Vagina (tissue), 2 donors: ENCODE measurements at regions of chr22 and their contacts with region 1.

Region 1: DNA sequence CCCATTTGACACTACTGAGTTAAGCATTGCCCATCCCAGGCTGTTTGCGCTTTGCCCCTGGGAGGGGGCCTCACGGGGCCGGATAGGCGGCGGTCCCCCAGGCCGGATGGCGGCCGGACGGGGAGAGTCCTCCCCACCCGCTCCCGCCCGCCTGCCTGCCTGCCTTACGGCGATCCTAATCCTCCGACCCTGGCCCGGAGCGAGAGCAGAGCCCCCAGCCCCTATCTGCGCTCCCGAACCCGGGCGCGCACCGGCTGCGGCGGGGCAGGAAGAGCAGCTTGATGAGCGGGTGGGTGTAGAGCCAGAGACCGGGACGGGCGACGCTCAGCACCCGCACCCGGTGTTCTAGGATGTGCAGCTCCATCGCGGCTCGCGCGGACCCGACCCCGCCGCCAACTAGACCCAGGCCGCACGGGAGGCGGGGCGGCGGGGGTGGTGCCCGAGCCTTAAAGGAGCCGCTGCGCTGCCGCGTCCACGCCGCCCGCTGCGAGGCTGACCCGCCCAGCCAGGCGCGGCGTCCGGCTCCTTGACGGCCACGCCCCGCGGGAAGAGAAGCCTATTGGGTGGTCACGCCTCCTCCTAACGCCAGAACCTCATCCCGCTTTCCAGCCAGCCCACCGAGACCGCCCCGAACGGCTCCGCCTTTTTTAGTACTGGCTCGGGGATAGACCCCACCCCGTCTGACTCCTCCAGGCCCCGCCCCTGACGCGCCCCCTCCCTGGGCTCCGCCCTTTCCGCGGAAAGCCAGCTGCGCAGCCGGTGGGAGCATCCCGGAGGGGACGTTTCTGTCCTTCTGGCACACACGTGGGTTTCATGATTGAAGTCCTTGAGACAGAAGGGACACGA is at the start of gene CASTOR1:
- DNase-seq: peak in 1 of 2 donors; percentile 99
- H3K4me3 ChIP-seq: peak within 1 kb of the TSS; percentile 99 to 100
- H3K27ac ChIP-seq: peak within 1 kb of the TSS; percentile 97
- H3K4me1 ChIP-seq: peaks cover 60% of the 10 kb centered on the region
- H3K27me3 ChIP-seq: no peaks in the 10 kb centered on the region
- CTCF ChIP-seq: no peak
- POLR2A ChIP-seq: peak in 1 of 2 donors; percentile 86
- total RNA-seq, gene CASTOR1: 51.8 TPM

Region 2: DNA sequence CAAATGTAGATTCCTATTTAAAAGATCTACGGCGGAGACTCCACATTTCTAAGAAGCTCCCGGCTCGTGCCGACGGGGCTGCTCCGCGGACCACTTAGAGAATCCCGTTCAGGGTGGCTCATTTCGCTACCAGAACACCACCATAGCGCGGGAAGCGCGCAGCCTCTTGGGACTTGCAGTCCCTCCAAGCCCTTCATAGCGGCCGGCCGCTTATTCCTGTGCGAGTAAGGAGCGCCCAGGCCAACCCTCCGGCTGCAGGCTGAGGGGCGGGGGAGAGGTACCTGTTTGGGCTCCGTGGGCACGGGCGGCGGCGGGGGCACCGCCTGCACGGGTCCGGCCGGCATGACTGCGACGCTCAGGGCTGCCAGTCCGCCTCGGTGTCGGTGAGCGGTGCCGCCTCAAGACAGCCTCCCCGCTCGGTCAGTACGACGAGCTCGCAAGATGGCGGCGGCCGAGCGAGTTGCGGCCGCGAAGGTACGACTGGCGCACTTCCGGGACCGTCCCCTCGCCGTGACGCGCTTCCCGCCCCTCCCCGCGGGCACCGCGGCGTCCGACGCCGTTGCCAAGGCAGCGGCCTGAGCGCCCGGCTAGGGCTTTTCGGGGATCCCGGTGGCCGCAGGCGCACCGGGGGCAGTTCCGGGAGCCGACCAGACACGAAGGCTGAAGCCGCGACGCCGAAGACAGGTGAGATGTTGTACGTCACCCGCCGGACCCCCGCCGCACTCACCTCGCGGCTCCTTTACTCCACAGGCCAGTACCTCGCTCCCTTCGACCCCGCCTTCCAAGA is 67.3 kb after region 1 on chr22 and contains the starts of genes CCDC157 and SF3A1:
- intact Hi-C with region 1: loop called (anchors 10 kb)
- DNase-seq: peak in 1 of 2 donors; percentile 91
- H3K4me3 ChIP-seq: peak within 1 kb of the TSS; percentile 66 to 89
- H3K27ac ChIP-seq: peak within 1 kb of the TSS; percentile 95
- H3K4me1 ChIP-seq: peaks cover 37% of the 10 kb centered on the region
- H3K27me3 ChIP-seq: no peaks in the 10 kb centered on the region
- CTCF ChIP-seq: peak in 1 of 3 experiments; percentile 33
- POLR2A ChIP-seq: peak in 1 of 2 donors; percentile 89
- total RNA-seq, gene CCDC157: 4.2 TPM
- total RNA-seq, gene SF3A1: 78.3 TPM